Panc1 (cell line): ENCODE measurements at regions of chr4 and their contacts with region 1.

Region 1: GRCh38 chr4:67366311-67366861 is 178.9 kb downstream of the CENPC start:
- DNase-seq: no peak
- ATAC-seq: no peak
- H3K4me3 ChIP-seq: no peak overlapping the region
- H3K27ac ChIP-seq: no peak overlapping the region
- H3K4me1 ChIP-seq: no peaks in the 10 kb centered on the region
- H3K27me3 ChIP-seq: no peaks in the 10 kb centered on the region
- CTCF ChIP-seq: no peak

Region 2: DNA sequence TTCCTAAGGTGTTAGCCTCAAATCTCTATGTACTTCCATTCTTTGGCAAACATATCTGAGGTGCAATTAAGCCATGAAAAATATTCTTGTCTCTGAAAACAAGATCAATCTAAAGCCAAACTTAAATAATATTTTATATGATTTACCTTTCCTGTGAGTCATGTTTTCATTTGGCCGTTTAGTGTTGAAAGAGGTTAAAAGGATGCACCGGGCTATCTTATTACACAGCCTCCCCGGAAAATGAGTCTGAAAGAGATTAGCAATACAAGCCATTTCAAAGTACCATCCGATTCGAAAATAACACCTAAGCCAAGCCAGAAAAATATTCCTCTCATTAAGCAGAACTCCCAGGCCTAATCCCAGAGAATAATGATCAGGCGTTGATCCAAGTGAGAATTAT is 1534.6 kb before region 1 on chr4:
- CTCF ChIA-PET with region 1: interaction called, 10 read pairs
- POLR2A ChIA-PET with region 1: no interaction called
- in situ Hi-C with region 1: no loop called
- intact Hi-C with region 1: no loop called
- DNase-seq: no peak
- ATAC-seq: no peak
- H3K4me3 ChIP-seq: no peak overlapping the region
- H3K27ac ChIP-seq: no peak overlapping the region
- H3K4me1 ChIP-seq: no peaks in the 10 kb centered on the region
- H3K27me3 ChIP-seq: no peaks in the 10 kb centered on the region
- CTCF ChIP-seq: no peak

Region 3: DNA sequence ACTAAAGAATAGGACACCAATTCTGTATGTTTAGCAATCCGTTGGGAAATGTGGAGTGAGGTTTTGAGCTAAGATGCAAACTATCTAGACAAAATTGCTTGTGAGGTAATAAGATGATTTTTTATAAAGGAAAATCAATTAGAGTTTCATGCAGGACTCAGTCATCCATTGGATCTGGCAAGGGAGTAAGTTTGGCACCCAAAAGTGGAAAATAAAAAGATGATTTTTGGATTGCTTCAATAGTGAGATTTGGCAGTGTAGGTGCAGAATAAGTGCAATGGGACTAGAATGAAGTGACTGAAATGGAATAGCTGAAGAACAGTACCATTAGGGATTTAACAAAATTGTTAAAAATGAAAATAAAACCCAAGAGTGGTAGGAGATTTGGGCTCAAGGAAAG is 1405.6 kb before region 1 on chr4:
- CTCF ChIA-PET with region 1: no interaction called
- POLR2A ChIA-PET with region 1: no interaction called
- in situ Hi-C with region 1: no loop called
- intact Hi-C with region 1: no loop called
- DNase-seq: no peak
- ATAC-seq: no peak
- H3K4me3 ChIP-seq: no peak overlapping the region
- H3K27ac ChIP-seq: no peak overlapping the region
- H3K4me1 ChIP-seq: no peaks in the 10 kb centered on the region
- H3K27me3 ChIP-seq: no peaks in the 10 kb centered on the region
- CTCF ChIP-seq: no peak